ENCODE measurements at regions of chr5 and their contacts with region 1.

Region 1: GRCh38 chr5:154547551-154547950 is 69.5 kb upstream of the HAND1 start:
- DNase-seq: no peak
- H3K4me3 ChIP-seq: no peak overlapping the region
- H3K27ac ChIP-seq: no peak overlapping the region
- H3K4me1 ChIP-seq: no peaks in the 10 kb centered on the region
- H3K27me3 ChIP-seq: no peaks in the 10 kb centered on the region
- CTCF ChIP-seq: no peak

Region 2: DNA sequence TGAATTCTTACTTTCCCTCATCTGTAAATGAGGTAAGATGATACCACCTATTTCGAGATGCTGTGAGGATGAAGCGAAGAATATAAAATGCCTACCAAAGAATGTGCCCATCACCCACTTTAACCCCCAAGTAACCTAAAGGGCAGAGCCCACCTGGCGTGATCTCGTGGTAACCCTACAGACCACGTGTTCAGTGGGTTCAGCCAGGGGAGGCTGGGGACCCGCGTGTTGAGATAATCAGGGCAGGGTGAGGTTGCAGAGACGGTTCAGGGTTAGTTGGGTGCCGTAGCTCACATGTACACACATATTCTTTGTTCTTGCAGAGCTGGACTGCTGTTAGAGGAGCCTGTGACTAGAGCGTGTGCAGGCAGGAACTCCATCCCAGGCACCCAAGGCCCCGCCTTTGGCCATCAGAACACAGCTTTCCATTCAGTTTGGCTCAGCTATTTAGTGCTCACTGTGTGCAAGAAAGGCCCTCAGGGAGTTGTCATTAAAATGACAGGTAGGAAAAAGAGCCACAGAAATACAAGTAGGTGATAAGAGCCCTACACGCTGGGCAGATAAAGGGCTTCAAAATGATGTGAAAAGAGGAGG is 13.0 kb before region 1 on chr5:
- CTCF ChIA-PET with region 1: no interaction called
- POLR2A ChIA-PET with region 1: interaction called, 15 read pairs
- intact Hi-C with region 1: no loop called
- DNase-seq: no peak
- H3K4me3 ChIP-seq: no peak overlapping the region
- H3K27ac ChIP-seq: no peak overlapping the region
- H3K4me1 ChIP-seq: no peaks in the 10 kb centered on the region
- H3K27me3 ChIP-seq: no peaks in the 10 kb centered on the region
- CTCF ChIP-seq: no peak

Region 3: GRCh38 chr5:155906046-155906445 is 1358.5 kb after region 1 on chr5:
- CTCF ChIA-PET with region 1: no interaction called
- POLR2A ChIA-PET with region 1: no interaction called
- intact Hi-C with region 1: no loop called
- DNase-seq: peak; percentile 1
- H3K4me3 ChIP-seq: no peak overlapping the region
- H3K27ac ChIP-seq: no peak overlapping the region
- H3K4me1 ChIP-seq: no peaks in the 10 kb centered on the region
- H3K27me3 ChIP-seq: no peaks in the 10 kb centered on the region
- CTCF ChIP-seq: no peak